ENCODE measurements at regions of chr5 and their contacts with region 1.

Region 1: GRCh38 chr5:100777680-100778281 is 125.3 kb downstream of the ST8SIA4 start:
- DNase-seq: no peak
- H3K4me3 Mint-ChIP-seq: peak overlapping the region; percentile 30
- H3K27ac Mint-ChIP-seq: peak overlapping the region; percentile 31
- H3K4me1 Mint-ChIP-seq: peaks cover 41% of the 10 kb centered on the region
- H3K27me3 Mint-ChIP-seq: no peaks in the 10 kb centered on the region

Region 2: DNA sequence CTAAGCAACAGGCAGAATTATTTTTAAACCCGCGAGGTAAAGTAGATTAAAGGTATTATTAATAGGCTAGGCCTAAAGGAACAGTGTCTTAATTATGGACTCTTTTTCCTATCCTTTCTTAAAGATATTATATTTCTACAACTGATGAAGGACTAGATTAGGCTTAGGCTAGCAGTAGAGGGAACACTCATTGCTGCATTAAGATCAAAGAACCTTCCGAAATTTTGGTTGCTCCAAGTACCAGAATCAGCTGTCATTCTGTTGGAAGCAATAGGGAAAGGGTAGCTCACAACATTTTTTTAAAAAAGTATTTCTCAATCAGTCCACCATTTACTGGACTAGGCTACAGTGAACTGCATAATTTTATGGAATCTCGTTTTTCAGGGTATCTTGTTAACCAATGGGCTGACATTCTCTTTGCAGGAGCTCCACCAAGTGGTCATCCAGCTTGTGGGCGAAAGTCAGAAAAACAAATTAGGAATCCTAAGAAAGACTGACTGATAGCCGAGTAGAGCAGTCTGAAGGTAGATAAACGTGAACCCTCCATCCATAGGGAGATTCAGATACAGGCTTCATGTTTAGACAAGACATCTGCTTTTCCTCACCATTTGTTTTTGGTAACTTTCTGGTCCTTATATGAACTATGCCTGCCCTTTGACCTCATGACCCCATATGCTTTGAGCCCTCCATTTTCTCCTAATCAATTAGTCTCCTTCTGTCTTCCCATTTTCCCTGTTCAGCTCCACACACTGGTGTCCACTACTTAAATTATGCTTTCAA is 1745.4 kb before region 1 on chr5:
- intact Hi-C with region 1: loop called (anchors 5 kb)
- DNase-seq: no peak
- H3K4me3 Mint-ChIP-seq: peak overlapping the region; percentile 77
- H3K27ac Mint-ChIP-seq: peak overlapping the region; percentile 82
- H3K4me1 Mint-ChIP-seq: peaks cover 69% of the 10 kb centered on the region
- H3K27me3 Mint-ChIP-seq: no peaks in the 10 kb centered on the region

Region 3: GRCh38 chr5:100659080-100659795 is 118.5 kb before region 1 on chr5:
- intact Hi-C with region 1: loop called (anchors 1 kb)
- DNase-seq: no peak
- H3K4me3 Mint-ChIP-seq: no peak overlapping the region
- H3K27ac Mint-ChIP-seq: peak overlapping the region; percentile 9
- H3K4me1 Mint-ChIP-seq: peaks cover 20% of the 10 kb centered on the region
- H3K27me3 Mint-ChIP-seq: peaks cover 7% of the 10 kb centered on the region

Region 4: GRCh38 chr5:100827481-100827889 is 49.7 kb after region 1 on chr5:
- intact Hi-C with region 1: loop called (anchors 2 kb)
- DNase-seq: no peak
- H3K4me3 Mint-ChIP-seq: no peak overlapping the region
- H3K27ac Mint-ChIP-seq: peak overlapping the region; percentile 79
- H3K4me1 Mint-ChIP-seq: peaks cover 40% of the 10 kb centered on the region
- H3K27me3 Mint-ChIP-seq: no peaks in the 10 kb centered on the region

Region 5: GRCh38 chr5:100852988-100853449 is 75.2 kb after region 1 on chr5:
- intact Hi-C with region 1: loop called (anchors 1 kb)
- DNase-seq: no peak
- H3K4me3 Mint-ChIP-seq: peak overlapping the region; percentile 72
- H3K27ac Mint-ChIP-seq: peak overlapping the region; percentile 97
- H3K4me1 Mint-ChIP-seq: peaks cover 42% of the 10 kb centered on the region
- H3K27me3 Mint-ChIP-seq: no peaks in the 10 kb centered on the region